ENCODE measurements at regions of chr6 and their contacts with region 1.

Region 1: DNA sequence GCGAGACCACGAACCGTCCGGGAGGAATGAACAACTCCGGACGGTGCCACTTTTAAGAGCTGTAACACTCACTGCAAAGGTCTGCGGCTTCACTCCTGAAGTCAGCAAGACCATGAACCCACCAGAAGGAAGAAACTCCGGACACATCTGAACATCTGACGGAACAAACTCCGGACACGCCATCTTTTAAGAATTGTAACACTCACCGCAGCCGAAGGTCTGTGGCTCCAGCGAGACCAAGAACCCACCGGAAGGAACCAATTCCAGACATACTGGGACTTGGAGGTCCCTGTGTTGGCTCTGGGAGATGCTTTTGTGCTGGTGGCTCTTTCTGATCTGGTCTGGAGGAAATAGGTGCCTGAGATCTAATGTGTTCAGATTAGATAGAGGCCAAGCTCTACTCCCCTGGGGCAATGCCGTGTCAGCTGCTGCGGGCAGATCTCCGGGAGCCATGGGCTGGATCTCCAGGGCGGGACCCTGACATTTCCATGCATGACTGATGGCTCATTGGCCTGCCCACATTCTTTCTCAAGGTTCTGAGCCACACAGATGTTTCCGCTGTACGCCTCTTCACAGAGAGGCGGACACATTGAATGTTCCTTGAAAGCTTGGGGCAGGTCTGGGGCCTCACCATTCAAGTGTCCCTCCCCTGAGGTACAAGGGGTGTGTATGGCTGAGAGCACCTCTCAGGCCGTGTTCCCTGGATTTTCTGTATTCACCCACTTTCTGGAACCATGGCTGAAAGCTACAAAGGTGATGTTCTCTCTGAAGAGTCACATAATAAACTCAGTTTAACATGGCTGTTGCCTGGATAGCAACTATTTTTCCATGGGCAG is 29.3 kb downstream of the GMPR start:
- DNase-seq: peak; percentile 91 to 98 (median 92)
- ATAC-seq: peak; percentile 81
- H3K4me3 ChIP-seq: peak overlapping the region; percentile 42
- H3K27ac ChIP-seq: peak overlapping the region; percentile 83
- H3K4me1 ChIP-seq: peaks cover 28 to 44% of the 10 kb centered on the region in 2 experiments
- H3K27me3 ChIP-seq: no peaks in the 10 kb centered on the region
- CTCF ChIP-seq: no peak
- EP300 ChIP-seq: peak; percentile 96
- POLR2A ChIP-seq: peak; percentile 89
- RAD21 ChIP-seq: no peak; a peak in 1 of 4 replicates

Region 2: GRCh38 chr6:16206595-16207037 is 61.0 kb before region 1 on chr6:
- CTCF ChIA-PET with region 1: no interaction called
- POLR2A ChIA-PET with region 1: interaction called, 13 read pairs
- in situ Hi-C with region 1: no loop called
- intact Hi-C with region 1: no loop called
- DNase-seq: peak; percentile 79 to 84 (median 79)
- ATAC-seq: peak; percentile 88
- H3K4me3 ChIP-seq: no peak overlapping the region
- H3K27ac ChIP-seq: no peak overlapping the region; the same call in 1 of the 3 replicates
- H3K4me1 ChIP-seq: peaks cover 8 to 14% of the 10 kb centered on the region in 2 experiments; a peak in 4 of 5 replicates
- H3K27me3 ChIP-seq: no peaks in the 10 kb centered on the region
- CTCF ChIP-seq: peak; percentile 88 to 98 (median 96)
- EP300 ChIP-seq: no peak; the same call in 1 of the 2 replicates
- POLR2A ChIP-seq: no peak
- RAD21 ChIP-seq: peak; percentile 97

Region 3: GRCh38 chr6:16228709-16229665 is 38.7 kb before region 1 on chr6:
- CTCF ChIA-PET with region 1: no interaction called
- POLR2A ChIA-PET with region 1: interaction called, 42 read pairs
- in situ Hi-C with region 1: no loop called
- intact Hi-C with region 1: loop called (anchors 1 kb)
- DNase-seq: no peak
- ATAC-seq: peak; percentile 8
- H3K4me3 ChIP-seq: no peak overlapping the region
- H3K27ac ChIP-seq: no peak overlapping the region
- H3K4me1 ChIP-seq: peaks cover 24 to 53% of the 10 kb centered on the region in 2 experiments
- H3K27me3 ChIP-seq: no peaks in the 10 kb centered on the region
- CTCF ChIP-seq: peak in 1 of 3 experiments; percentile 38; a peak in 2 of 6 replicates
- EP300 ChIP-seq: no peak
- POLR2A ChIP-seq: no peak
- RAD21 ChIP-seq: peak in 1 of 2 experiments; percentile 45; a peak in 2 of 4 replicates

Region 4: GRCh38 chr6:16286148-16286522 is 18.5 kb after region 1 on chr6:
- CTCF ChIA-PET with region 1: no interaction called
- POLR2A ChIA-PET with region 1: interaction called, 36 read pairs
- in situ Hi-C with region 1: no loop called
- intact Hi-C with region 1: no loop called
- DNase-seq: peak; percentile 52 to 62 (median 58)
- ATAC-seq: peak; percentile 82
- H3K4me3 ChIP-seq: no peak overlapping the region
- H3K27ac ChIP-seq: no peak overlapping the region
- H3K4me1 ChIP-seq: peaks cover 0 to 7% of the 10 kb centered on the region in 2 experiments; a peak in 1 of 5 replicates
- H3K27me3 ChIP-seq: no peaks in the 10 kb centered on the region
- CTCF ChIP-seq: peak; percentile 67 to 73 (median 67)
- EP300 ChIP-seq: no peak
- POLR2A ChIP-seq: no peak
- RAD21 ChIP-seq: peak in 1 of 2 experiments; percentile 40; a peak in 2 of 4 replicates

Region 5: GRCh38 chr6:16322666-16323312 is 55.1 kb after region 1 on chr6:
- CTCF ChIA-PET with region 1: no interaction called
- POLR2A ChIA-PET with region 1: interaction called, 15 read pairs
- in situ Hi-C with region 1: no loop called
- intact Hi-C with region 1: no loop called
- DNase-seq: peak; percentile 78 to 91 (median 82)
- ATAC-seq: peak; percentile 92
- H3K4me3 ChIP-seq: no peak overlapping the region
- H3K27ac ChIP-seq: peak overlapping the region; percentile 72
- H3K4me1 ChIP-seq: peaks cover 31 to 41% of the 10 kb centered on the region in 2 experiments
- H3K27me3 ChIP-seq: no peaks in the 10 kb centered on the region; a peak in 1 of 5 replicates
- CTCF ChIP-seq: no peak; a peak in 1 of 6 replicates
- EP300 ChIP-seq: peak; percentile 44; the same call in 1 of the 2 replicates
- POLR2A ChIP-seq: peak; percentile 61
- RAD21 ChIP-seq: 0 out of 4 replicates have a peak, but pooled peaks of 1 of the 2 experiments have one; percentile 11

Measured in K562 (cell line).